ENCODE measurements at regions of chr5 and their contacts with region 1.

Region 1: DNA sequence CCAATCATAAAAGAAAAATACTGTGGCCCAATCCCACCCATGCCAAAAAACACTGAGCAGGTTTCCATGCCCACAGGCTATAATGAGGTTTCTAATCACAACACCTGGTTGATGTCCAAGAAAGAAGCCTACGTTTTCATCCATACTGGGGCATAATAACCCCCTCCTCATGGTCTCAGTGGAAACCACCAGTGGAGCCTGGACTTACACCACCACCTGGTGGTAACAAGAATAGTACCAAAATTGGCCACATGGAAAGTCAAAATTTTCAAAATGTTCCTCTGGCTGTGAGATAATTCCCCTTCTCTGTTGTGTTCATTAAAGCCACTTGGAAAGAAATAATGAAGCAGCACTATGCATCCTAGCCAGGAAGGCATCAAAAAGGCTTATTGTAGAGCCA is 687.3 kb upstream of the ST8SIA4 start:
- H3K4me3 ChIP-seq: no peak overlapping the region
- H3K27ac ChIP-seq: no peak overlapping the region
- H3K4me1 ChIP-seq: no peaks in the 10 kb centered on the region
- CTCF ChIP-seq: no peak

Region 2: GRCh38 chr5:102200861-102201260 is 610.5 kb after region 1 on chr5:
- CTCF ChIA-PET with region 1: interaction called, 11 read pairs
- POLR2A ChIA-PET with region 1: no interaction called
- H3K4me3 ChIP-seq: no peak overlapping the region
- H3K27ac ChIP-seq: no peak overlapping the region
- H3K4me1 ChIP-seq: no peaks in the 10 kb centered on the region
- CTCF ChIP-seq: no peak

Region 3: DNA sequence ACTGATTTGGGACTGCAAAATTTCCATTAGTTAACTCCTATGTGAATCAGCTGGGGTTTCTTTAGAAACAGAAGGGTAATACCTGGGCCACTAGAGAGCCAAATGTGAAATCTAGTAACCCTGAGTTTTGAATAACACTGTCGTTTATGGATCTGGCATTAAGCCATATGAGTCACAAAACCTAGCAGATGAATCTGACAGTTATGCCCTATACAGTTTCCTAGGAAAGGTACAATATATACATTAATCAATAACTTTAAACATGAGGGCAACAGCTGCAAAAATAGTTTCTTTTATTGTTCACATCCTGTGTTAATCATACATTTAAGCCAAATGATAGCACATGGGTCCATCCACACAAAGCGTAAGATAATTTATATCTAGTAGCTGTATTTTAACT is 1221.6 kb after region 1 on chr5:
- CTCF ChIA-PET with region 1: no interaction called
- POLR2A ChIA-PET with region 1: no interaction called
- H3K4me3 ChIP-seq: no peak overlapping the region
- H3K27ac ChIP-seq: no peak overlapping the region
- H3K4me1 ChIP-seq: peaks cover 30% of the 10 kb centered on the region
- CTCF ChIP-seq: no peak